ENCODE measurements at regions of chr7 and their contacts with region 1.

Region 1: GRCh38 chr7:44921607-44922359 is 36.5 kb upstream of the PURB start:
- DNase-seq: peak; percentile 88 to 99 (median 92)
- ATAC-seq: peak; percentile 94
- H3K4me3 ChIP-seq: no peak overlapping the region
- H3K4me3 Mint-ChIP-seq: no peak overlapping the region
- H3K27ac ChIP-seq: no peak overlapping the region
- H3K27ac Mint-ChIP-seq: no peak overlapping the region
- H3K4me1 ChIP-seq: no peaks in the 10 kb centered on the region
- H3K4me1 Mint-ChIP-seq: peaks cover 5% of the 10 kb centered on the region
- H3K27me3 ChIP-seq: peaks cover 0 to 2% of the 10 kb centered on the region in 2 experiments
- H3K27me3 Mint-ChIP-seq: peaks cover under 1% of the 10 kb centered on the region
- CTCF ChIP-seq: peak; percentile 87

Region 2: GRCh38 chr7:44894888-44895580 is 26.7 kb before region 1 on chr7:
- CTCF ChIA-PET with region 1: interaction called, 4 read pairs
- POLR2A ChIA-PET with region 1: no interaction called
- intact Hi-C with region 1: loop called in 1 of 2 experiments (anchors 1 kb)
- DNase-seq: no peak
- ATAC-seq: no peak
- H3K4me3 ChIP-seq: no peak overlapping the region
- H3K4me3 Mint-ChIP-seq: no peak overlapping the region
- H3K27ac ChIP-seq: no peak overlapping the region
- H3K27ac Mint-ChIP-seq: no peak overlapping the region
- H3K4me1 ChIP-seq: peaks cover 22% of the 10 kb centered on the region
- H3K4me1 Mint-ChIP-seq: peaks cover 32% of the 10 kb centered on the region
- H3K27me3 ChIP-seq: no peaks in the 10 kb centered on the region
- H3K27me3 Mint-ChIP-seq: no peaks in the 10 kb centered on the region
- CTCF ChIP-seq: no peak

Measured in CD8-positive, alpha-beta T cell (primary cell).